Heart left ventricle (tissue), 16 donors: ENCODE measurements at regions of chr7 and their contacts with region 1.

Region 1: GRCh38 chr7:104983578-104984539 is 30.1 kb upstream of the KMT2E start:
- DNase-seq: peak; percentile 92 to 94 (median 93)
- ATAC-seq: peak; percentile 93 to 97 (median 95)
- H3K4me3 ChIP-seq: peak overlapping the region; percentile 55 to 73 (median 68)
- H3K27ac ChIP-seq: peak overlapping the region; percentile 90 to 99 (median 98)
- H3K4me1 ChIP-seq: peaks cover 0 to 88% (median 63%) of the 10 kb centered on the region in 12 donors
- H3K27me3 ChIP-seq: no peaks in the 10 kb centered on the region
- CTCF ChIP-seq: peak; percentile 28 to 84 (median 58)
- POLR2A ChIP-seq: peak in 1 of 2 donors; percentile 84

Region 2: DNA sequence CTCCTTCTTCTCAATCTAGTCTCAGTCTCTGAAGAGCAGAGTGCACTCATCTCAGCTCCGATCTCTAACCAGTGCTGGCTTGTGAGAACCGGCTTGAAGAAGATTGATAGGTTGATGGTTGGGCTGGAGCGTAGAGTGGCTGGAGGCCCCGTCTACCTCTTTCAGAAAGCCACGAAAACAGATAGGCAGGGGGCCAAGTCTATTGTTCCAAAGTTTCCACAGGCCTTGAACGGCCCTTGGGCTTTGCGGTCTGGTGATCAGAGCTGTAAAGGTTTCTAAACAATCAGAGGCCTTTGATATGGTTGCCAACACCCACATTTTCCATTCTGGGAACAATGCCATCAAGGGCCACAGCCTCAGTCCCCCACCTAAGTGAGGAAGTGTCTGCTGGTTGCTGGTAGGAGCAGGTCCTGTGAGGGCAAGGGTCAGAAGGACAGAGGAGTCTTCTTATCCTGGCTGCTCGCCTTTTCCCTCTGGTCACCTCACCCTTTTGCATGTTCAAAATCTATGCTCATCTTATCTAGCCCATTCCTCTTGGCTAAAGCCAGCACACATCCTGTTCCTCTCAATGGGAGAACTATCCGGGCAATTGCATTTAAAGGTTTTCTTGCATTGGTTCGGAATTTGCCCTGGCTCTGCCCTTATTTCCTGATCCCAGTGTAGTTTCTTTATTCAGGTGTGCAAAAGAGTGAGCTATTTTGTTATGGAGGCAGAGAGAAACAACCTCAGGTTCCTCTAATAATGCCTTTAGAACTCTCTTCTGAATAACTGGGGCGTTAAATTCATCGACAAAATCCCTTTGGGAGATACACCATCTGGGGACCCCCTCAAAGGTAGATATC is 40.1 kb before region 1 on chr7:
- intact Hi-C with region 1: loop called in 4 of 10 experiments (anchors 2 to 5 kb)
- DNase-seq: peak in 4 of 5 donors; percentile 77 to 91 (median 83)
- ATAC-seq: peak; percentile 26 to 65 (median 52)
- H3K4me3 ChIP-seq: peak overlapping the region in 3 of 12 donors; percentile 0 to 32 (median 6)
- H3K27ac ChIP-seq: peak overlapping the region; percentile 79 to 99 (median 92)
- H3K4me1 ChIP-seq: peaks cover 3 to 55% (median 30%) of the 10 kb centered on the region in 12 donors
- H3K27me3 ChIP-seq: no peaks in the 10 kb centered on the region
- CTCF ChIP-seq: no peak
- POLR2A ChIP-seq: no peak

Region 3: DNA sequence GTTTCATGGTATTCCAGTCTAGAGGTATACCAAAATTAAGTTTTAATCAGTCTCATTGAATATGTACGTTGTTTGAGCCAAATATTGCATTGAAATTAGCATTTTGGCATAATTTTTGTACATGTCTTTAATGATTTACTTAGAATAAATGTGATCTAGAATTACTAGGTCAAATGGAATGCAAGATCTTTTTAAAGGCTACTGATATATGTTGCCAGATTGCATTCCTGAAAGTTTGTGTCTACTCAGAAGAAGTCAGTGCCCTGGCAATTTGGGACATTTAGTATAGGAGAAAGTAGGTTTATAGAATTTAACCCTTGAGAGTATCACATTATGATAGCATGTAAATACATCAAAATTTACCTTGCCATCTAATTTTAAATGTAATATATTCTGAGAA is 62.6 kb after region 1 on chr7:
- intact Hi-C with region 1: loop called in 3 of 10 experiments (anchors 2 to 10 kb)
- DNase-seq: no peak
- ATAC-seq: no peak
- H3K4me3 ChIP-seq: no peak overlapping the region
- H3K27ac ChIP-seq: no peak overlapping the region
- H3K4me1 ChIP-seq: peaks cover 6 to 66% (median 40%) of the 10 kb centered on the region in 12 donors
- H3K27me3 ChIP-seq: no peaks in the 10 kb centered on the region
- CTCF ChIP-seq: no peak
- POLR2A ChIP-seq: no peak

Region 4: GRCh38 chr7:105079348-105079747 is 95.5 kb after region 1 on chr7:
- intact Hi-C with region 1: loop called in 1 of 10 experiments (anchors 10 kb)
- DNase-seq: no peak
- ATAC-seq: peak in 1 of 4 donors; percentile 45
- H3K4me3 ChIP-seq: no peak overlapping the region
- H3K27ac ChIP-seq: no peak overlapping the region
- H3K4me1 ChIP-seq: peaks cover 0 to 5% (median 0%) of the 10 kb centered on the region in 12 donors
- H3K27me3 ChIP-seq: no peaks in the 10 kb centered on the region
- CTCF ChIP-seq: no peak
- POLR2A ChIP-seq: no peak

Region 5: GRCh38 chr7:105118612-105119600 is 135.0 kb after region 1 on chr7:
- intact Hi-C with region 1: loop called in 1 of 10 experiments (anchors 10 kb)
- DNase-seq: no peak
- ATAC-seq: no peak
- H3K4me3 ChIP-seq: no peak overlapping the region
- H3K27ac ChIP-seq: no peak overlapping the region
- H3K4me1 ChIP-seq: no peaks in the 10 kb centered on the region
- H3K27me3 ChIP-seq: no peaks in the 10 kb centered on the region
- CTCF ChIP-seq: no peak
- POLR2A ChIP-seq: no peak

Region 6: GRCh38 chr7:105278973-105279687 is 295.3 kb after region 1 on chr7:
- intact Hi-C with region 1: no loop called
- DNase-seq: no peak
- ATAC-seq: no peak
- H3K4me3 ChIP-seq: no peak overlapping the region
- H3K27ac ChIP-seq: no peak overlapping the region
- H3K4me1 ChIP-seq: peaks cover 0 to 14% (median 5%) of the 10 kb centered on the region in 12 donors
- H3K27me3 ChIP-seq: no peaks in the 10 kb centered on the region
- CTCF ChIP-seq: no peak
- POLR2A ChIP-seq: no peak

Region 7: DNA sequence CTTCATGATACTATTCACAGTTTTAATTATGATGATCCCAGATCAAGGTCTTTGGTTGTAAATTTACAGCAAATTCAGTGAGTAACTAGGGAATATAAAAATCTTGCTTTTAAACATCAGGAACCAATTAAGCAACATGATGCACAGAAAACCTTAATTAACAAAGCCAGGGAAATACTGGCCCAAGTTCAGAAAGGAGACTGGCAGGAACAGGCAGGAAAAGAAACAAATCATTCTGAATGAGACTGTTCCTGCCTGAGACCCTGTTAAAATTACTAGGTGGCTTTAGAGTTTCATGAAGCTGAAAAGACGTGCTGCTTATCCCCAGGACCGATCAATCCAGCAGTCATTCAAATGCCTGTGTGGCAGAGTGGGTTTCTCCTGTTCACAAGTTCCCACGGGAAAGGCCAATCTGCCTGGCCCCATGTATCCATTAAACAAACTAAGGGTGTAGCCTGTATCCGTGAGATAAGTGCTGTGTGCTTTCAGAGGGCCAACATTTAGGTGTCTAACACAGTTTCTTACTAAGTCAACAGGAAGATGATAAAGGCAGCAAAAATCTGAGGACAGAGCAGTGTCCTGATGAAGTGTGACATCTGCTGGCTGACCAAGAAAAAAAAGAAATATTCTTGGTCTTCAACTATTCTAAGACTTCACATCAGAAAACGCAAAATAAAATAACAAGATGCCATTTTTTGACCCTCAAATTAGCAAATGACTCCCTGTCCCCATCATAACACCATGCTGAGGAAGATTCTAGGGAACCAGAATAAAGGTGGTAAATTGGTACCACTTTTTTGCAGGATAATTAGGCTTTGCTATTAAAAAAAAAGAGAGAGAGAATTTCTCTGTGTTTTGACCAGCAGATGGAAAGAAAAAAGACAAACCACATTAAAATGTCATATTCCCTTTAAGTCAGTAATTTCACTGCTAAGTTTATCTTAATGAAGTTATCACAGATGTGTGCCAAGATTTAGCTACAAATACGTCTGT is 504.0 kb after region 1 on chr7:
- intact Hi-C with region 1: loop called in 1 of 10 experiments (anchors 5 kb)
- DNase-seq: peak in 1 of 5 donors; percentile 11
- ATAC-seq: peak in 3 of 4 donors; percentile 71 to 87 (median 87)
- H3K4me3 ChIP-seq: no peak overlapping the region
- H3K27ac ChIP-seq: peak overlapping the region in 8 of 12 donors; percentile 2 to 29 (median 18)
- H3K4me1 ChIP-seq: peaks cover 0 to 12% (median 4%) of the 10 kb centered on the region in 12 donors
- H3K27me3 ChIP-seq: no peaks in the 10 kb centered on the region
- CTCF ChIP-seq: peak; percentile 12 to 58 (median 40)
- POLR2A ChIP-seq: peak in 1 of 2 donors; percentile 10